Activated CD4-positive, alpha-beta memory T cell treated with anti-CD3 and anti-CD28 coated beads for 36 hours (primary cell): ENCODE measurements at regions of chr6 and their contacts with region 1.

Region 1: GRCh38 chr6:139219271-139219729 is 72.5 kb downstream of the TXLNB start:
- DNase-seq: peak; percentile 83
- H3K4me3 Mint-ChIP-seq: peak overlapping the region; percentile 27
- H3K27ac Mint-ChIP-seq: no peak overlapping the region
- H3K4me1 Mint-ChIP-seq: peaks cover 7% of the 10 kb centered on the region
- H3K27me3 Mint-ChIP-seq: no peaks in the 10 kb centered on the region

Region 2: DNA sequence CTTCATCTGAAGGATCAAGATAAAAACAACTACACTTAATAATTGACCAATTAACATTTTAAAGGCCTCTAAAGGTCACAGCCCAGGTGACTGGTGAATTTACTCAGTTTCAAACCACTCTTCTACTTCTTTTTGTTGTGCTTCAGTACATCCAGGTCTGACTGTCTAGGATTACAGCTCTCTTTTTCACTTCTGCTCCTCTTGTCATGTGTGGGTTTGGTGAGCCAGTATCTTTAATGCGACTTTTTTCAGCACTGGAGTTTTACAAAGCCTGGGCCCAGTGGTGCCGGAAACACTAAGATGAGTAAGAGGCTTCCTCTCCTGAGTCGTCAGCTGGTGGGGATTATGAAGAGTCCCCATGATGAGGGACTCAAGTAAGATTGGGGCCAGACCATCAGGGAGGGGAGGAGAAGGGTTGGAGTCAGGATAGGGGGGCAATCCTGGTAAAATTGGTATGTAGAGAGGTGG is 57.4 kb before region 1 on chr6:
- CTCF ChIA-PET with region 1: interaction called, 5 read pairs
- POLR2A ChIA-PET with region 1: no interaction called
- intact Hi-C with region 1: loop called (anchors 2 kb)
- DNase-seq: peak; percentile 88
- H3K4me3 Mint-ChIP-seq: peak overlapping the region; percentile 61
- H3K27ac Mint-ChIP-seq: peak overlapping the region; percentile 96
- H3K4me1 Mint-ChIP-seq: peaks cover 92% of the 10 kb centered on the region
- H3K27me3 Mint-ChIP-seq: no peaks in the 10 kb centered on the region

Region 3: GRCh38 chr6:139250296-139251044 is 31.2 kb after region 1 on chr6:
- CTCF ChIA-PET with region 1: interaction called, 10 read pairs
- POLR2A ChIA-PET with region 1: no interaction called
- intact Hi-C with region 1: loop called (anchors 2 kb)
- DNase-seq: peak; percentile 75
- H3K4me3 Mint-ChIP-seq: no peak overlapping the region
- H3K27ac Mint-ChIP-seq: peak overlapping the region; percentile 73
- H3K4me1 Mint-ChIP-seq: peaks cover 49% of the 10 kb centered on the region
- H3K27me3 Mint-ChIP-seq: no peaks in the 10 kb centered on the region

Region 4: DNA sequence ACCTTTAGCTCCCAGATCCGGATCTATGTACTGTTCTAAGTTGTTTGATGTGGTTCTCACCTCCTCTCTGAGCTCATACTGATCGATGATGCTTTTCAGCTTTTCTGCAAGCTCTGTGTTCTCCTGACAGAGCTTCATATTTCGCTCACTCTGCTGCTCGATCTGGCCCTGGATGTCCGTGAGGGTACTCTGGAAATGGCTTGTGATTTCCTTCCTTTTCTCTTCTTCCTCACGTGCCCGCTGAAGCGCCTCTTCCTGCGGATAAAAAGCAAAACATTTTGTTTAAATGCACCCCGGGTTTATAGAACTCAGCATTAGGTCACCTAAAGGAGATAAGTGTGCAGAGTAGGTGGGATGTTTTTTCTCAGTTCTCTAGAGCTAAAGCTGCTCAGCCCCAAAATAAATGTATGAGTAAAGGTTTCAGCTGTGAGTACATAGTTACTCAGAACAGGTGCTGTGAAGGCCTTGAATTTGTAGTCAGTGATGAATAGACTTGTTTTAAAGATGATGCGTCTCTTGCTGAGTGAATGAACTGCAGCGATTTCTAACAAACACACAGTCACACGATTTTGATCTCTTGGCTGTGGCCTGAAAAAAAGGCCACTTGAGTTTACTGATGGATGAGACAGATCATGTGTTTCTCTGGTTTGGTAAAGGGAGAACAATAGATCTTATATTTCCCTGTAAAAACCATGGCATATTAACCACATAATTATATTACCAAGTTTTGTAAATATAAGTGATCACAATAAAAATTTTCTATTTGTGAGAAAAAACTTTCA is 43.4 kb after region 1 on chr6:
- CTCF ChIA-PET with region 1: interaction called, 10 read pairs
- POLR2A ChIA-PET with region 1: no interaction called
- intact Hi-C with region 1: loop called (anchors 5 kb)
- DNase-seq: peak; percentile 53
- H3K4me3 Mint-ChIP-seq: peak overlapping the region; percentile 70
- H3K27ac Mint-ChIP-seq: peak overlapping the region; percentile 89
- H3K4me1 Mint-ChIP-seq: peaks cover 39% of the 10 kb centered on the region
- H3K27me3 Mint-ChIP-seq: no peaks in the 10 kb centered on the region

Region 5: GRCh38 chr6:139364302-139364981 is 145.1 kb after region 1 on chr6:
- CTCF ChIA-PET with region 1: interaction called, 242 read pairs
- POLR2A ChIA-PET with region 1: interaction called, 7 read pairs
- intact Hi-C with region 1: loop called (anchors 1 kb)
- DNase-seq: no peak
- H3K4me3 Mint-ChIP-seq: no peak overlapping the region
- H3K27ac Mint-ChIP-seq: no peak overlapping the region
- H3K4me1 Mint-ChIP-seq: peaks cover 27% of the 10 kb centered on the region
- H3K27me3 Mint-ChIP-seq: no peaks in the 10 kb centered on the region